ENCODE measurements at regions of chr19 and their contacts with region 1.

Region 1: DNA sequence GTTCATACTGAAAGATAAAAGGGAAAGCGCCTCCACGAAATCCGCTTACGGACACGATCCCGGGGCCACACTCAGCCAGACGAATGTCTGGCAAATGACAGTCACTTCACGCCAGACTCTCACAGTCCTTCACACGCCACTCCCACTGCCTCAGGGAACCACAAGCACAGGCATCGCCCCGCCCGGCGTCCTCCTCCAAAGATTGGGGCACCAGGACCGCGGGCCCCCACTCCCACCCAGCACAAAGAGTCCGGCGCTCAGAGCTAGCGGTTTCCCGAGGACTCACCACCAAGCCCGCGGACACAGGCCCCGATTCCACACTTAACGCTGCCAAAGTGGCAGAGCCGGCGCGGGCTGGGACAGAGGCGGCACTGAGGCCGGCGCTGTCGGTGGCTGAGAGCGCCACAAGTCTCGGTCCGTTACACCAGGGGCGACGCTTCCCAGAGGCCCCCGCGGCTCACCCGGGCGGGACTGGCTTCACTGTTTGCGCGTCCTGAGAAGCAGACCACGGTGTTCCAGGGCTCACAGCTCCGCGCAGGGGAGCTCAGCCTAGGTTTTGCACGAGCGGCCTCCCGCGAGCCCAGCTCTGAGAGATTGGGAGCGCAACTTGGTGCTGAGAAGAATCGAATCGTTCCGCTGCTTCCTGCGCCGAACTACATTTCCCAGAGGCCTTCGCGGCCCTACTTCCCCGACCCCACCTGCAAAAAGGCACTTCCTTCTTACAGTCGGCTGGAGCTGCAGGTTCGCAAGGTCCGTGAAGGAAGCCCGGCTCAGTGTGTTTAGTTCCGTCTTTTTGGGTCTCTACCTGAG is at the start of gene ZNF569:
- DNase-seq: peak; percentile 92 to 97 (median 94)
- H3K4me3 ChIP-seq: peak within 1 kb of the TSS; percentile 67 to 100 (median 91)
- H3K27ac ChIP-seq: peak within 1 kb of the TSS; percentile 63 to 99 (median 96)
- H3K27me3 ChIP-seq: no peaks in the 10 kb centered on the region
- CTCF ChIP-seq: peak in 30 of 56 donors; percentile 6 to 49 (median 26)
- total RNA-seq, gene ZNF569: 8.0 to 18.7 (median 13.3) TPM

Region 2: GRCh38 chr19:36850559-36851442 is 616.2 kb before region 1 on chr19 and contains the start of gene ZNF345:
- intact Hi-C with region 1: loop called in 1 of 2 experiments (anchors 2 kb)
- DNase-seq: peak; percentile 80 to 95 (median 94)
- H3K4me3 ChIP-seq: peak within 1 kb of the TSS; percentile 63 to 99 (median 89)
- H3K27ac ChIP-seq: peak within 1 kb of the TSS; percentile 79 to 98 (median 94)
- H3K27me3 ChIP-seq: no peaks in the 10 kb centered on the region
- CTCF ChIP-seq: peak in 7 of 56 donors; percentile 5 to 17 (median 10)
- total RNA-seq, gene ZNF345: 4.2 to 23.2 (median 10.2) TPM

Region 3: GRCh38 chr19:37217855-37218591 is 249.0 kb before region 1 on chr19 and contains the start of gene ZNF383:
- intact Hi-C with region 1: loop called (anchors 5 to 10 kb)
- DNase-seq: peak; percentile 83 to 93 (median 90)
- H3K4me3 ChIP-seq: peak within 1 kb of the TSS; percentile 62 to 96 (median 85)
- H3K27ac ChIP-seq: peak within 1 kb of the TSS; percentile 91 to 100 (median 98)
- H3K27me3 ChIP-seq: no peaks in the 10 kb centered on the region
- CTCF ChIP-seq: peak in 19 of 56 donors; percentile 4 to 43 (median 17)
- total RNA-seq, gene ZNF383: 9.7 to 27.7 (median 16.2) TPM

Region 4: GRCh38 chr19:37506387-37507166 is 39.6 kb after region 1 on chr19 and contains the start of gene ZNF793:
- intact Hi-C with region 1: loop called (anchors 2 to 5 kb)
- DNase-seq: peak; percentile 70 to 89 (median 81)
- H3K4me3 ChIP-seq: peak within 1 kb of the TSS; percentile 66 to 95 (median 84)
- H3K27ac ChIP-seq: peak within 1 kb of the TSS; percentile 89 to 99 (median 97)
- H3K27me3 ChIP-seq: no peaks in the 10 kb centered on the region
- CTCF ChIP-seq: peak in 7 of 56 donors; percentile 5 to 16 (median 13)
- total RNA-seq, gene ZNF793: 15.9 to 32.1 (median 22.9) TPM

Region 5: GRCh38 chr19:37655689-37656371 is 188.8 kb after region 1 on chr19:
- intact Hi-C with region 1: loop called in 1 of 2 experiments (anchors 5 kb)
- DNase-seq: peak; percentile 71 to 91 (median 82)
- H3K4me3 ChIP-seq: peak overlapping the region; percentile 58 to 99 (median 86)
- H3K27ac ChIP-seq: peak overlapping the region; percentile 87 to 99 (median 95)
- H3K27me3 ChIP-seq: no peaks in the 10 kb centered on the region
- CTCF ChIP-seq: peak in 9 of 56 donors; percentile 3 to 37 (median 13)